ENCODE measurements at regions of chr1 and their contacts with region 1.

Region 1: DNA sequence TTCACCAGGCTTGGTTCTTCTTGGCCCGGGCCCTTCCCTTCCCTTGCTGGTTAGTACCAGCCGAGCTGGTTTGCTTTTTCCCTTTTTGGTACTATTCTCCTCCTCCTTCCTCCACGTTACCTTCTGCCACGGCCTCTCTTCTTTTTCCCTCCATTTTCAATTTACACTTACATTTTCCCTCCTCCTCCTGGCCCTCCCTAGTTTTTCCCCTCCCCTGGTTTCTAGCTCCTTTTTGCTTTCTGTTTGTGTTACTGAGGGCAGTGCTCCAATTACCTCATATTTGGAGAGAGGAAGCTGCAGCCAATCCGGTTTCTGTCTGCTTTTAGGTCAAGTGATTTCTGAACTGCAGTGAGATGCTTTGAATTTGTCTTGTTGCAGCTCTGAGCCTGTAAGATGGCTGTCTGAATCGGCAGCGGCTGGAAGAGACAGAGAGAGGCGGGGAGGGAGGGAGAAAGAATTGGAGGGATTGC is 63.7 kb downstream of the MACF1 start:
- DNase-seq: no peak
- H3K4me3 ChIP-seq: no peak overlapping the region
- H3K27ac ChIP-seq: no peak overlapping the region
- H3K4me1 ChIP-seq: no peaks in the 10 kb centered on the region
- H3K27me3 ChIP-seq: no peaks in the 10 kb centered on the region
- CTCF ChIP-seq: no peak

Region 2: GRCh38 chr1:39204441-39205081 is 63.6 kb before region 1 on chr1 and contains the start of gene MACF1:
- CTCF ChIA-PET with region 1: no interaction called
- POLR2A ChIA-PET with region 1: no interaction called
- intact Hi-C with region 1: no loop called
- DNase-seq: peak in 1 of 2 experiments; percentile 47
- H3K4me3 ChIP-seq: no peak within 1 kb of the TSS
- H3K27ac ChIP-seq: no peak within 1 kb of the TSS
- H3K4me1 ChIP-seq: 0 out of 2 replicates have a peak, but pooled peaks cover 5% of the 10 kb centered on the region
- H3K27me3 ChIP-seq: no peaks in the 10 kb centered on the region
- CTCF ChIP-seq: no peak
- total RNA-seq, gene MACF1: 189 and 199 TPM in 2 replicates

Region 3: GRCh38 chr1:39538588-39539465 is 270.7 kb after region 1 on chr1:
- CTCF ChIA-PET with region 1: no interaction called
- POLR2A ChIA-PET with region 1: no interaction called
- intact Hi-C with region 1: loop called (anchors 2 kb)
- DNase-seq: peak in 1 of 2 experiments; percentile 60
- H3K4me3 ChIP-seq: no peak overlapping the region
- H3K27ac ChIP-seq: no peak overlapping the region
- H3K4me1 ChIP-seq: no peaks in the 10 kb centered on the region
- H3K27me3 ChIP-seq: no peaks in the 10 kb centered on the region
- CTCF ChIP-seq: peak; percentile 86